Motor neuron (in vitro differentiated cells): ENCODE measurements at regions of chr5 and their contacts with region 1.

Region 1: DNA sequence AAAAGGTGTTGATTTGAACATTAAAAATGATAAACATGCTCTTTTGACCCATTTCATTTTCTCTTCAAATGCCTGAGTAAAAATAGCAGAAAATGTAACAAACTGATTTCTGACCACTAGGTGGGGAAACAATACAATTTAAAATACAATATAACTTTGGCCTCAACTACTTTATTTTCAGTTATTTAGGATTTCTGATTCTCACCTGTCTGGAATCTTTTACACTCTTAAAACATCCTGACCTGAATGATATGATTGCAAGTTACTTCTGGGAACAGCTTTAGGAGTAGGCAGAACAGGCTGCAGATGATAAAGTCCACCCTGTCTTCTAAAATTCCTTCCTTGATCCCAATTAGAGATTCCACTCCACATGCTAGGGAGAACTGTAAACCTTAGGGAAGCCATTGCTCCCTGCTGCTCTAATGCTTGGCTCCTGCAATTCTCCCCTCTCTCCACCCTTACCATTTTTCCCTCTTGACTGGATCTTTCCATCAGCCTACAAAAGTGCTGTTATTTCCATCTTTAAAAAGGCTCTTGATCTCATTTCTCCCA is 70.3 kb downstream of the FYB1 start:
- ATAC-seq: peak in 3 of 8 experiments; percentile 26 to 30 (median 28)
- H3K4me3 ChIP-seq: no peak overlapping the region
- H3K27ac ChIP-seq: no peak overlapping the region
- H3K4me1 ChIP-seq: no peaks in the 10 kb centered on the region

Region 2: DNA sequence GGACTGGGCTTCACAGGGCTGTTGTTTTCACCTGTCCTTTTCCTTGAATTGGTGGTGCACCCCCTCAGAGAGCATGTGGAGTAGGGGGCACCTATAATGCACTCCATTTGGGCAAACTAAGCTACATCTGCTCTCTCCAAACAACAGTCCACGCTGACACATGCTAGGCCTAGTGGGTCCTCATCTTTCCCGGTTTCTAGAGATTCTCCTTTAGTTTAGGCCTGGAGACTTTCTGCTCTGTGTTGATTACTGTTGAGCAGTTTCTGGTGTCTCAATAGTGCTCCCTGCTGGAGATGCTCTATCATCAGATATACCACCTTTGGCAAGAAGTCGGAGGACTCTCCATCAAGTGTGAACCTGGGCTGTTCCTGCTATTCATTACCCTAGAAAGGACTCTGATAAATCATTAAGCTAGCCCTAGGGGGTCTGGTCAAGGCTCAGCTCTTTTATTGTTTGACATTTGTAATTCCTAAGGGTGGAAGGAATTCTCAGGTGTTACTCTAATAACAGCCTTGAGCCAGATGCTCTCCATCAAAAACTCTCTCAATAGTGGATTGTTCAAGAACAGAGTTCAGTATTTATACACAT is 134.3 kb after region 1 on chr5:
- in situ Hi-C with region 1: loop called in 2 of 9 experiments (anchors 25 kb)
- ATAC-seq: peak in 3 of 8 experiments; percentile 95 to 98 (median 98)
- H3K4me3 ChIP-seq: no peak overlapping the region
- H3K27ac ChIP-seq: no peak overlapping the region
- H3K4me1 ChIP-seq: no peaks in the 10 kb centered on the region

Region 3: DNA sequence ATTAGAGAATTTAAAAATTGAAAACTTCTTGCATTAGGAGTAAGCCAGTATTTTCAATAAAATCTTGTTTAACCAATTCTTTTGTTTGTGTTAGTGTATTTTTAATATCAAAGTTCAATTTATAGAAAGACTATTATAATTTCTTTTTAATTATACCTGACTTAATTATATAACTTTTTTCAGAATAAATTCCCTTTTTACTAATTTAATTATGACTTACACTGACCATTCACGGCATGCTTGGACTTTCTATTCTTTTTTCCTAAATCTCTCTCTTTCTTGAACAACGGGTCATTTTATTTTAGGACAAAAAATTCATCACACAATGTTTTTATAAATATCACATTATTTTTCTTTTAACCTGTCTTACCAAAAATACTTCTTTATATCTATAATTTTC is 975.3 kb after region 1 on chr5:
- in situ Hi-C with region 1: no loop called
- ATAC-seq: no peak
- H3K4me3 ChIP-seq: no peak overlapping the region
- H3K27ac ChIP-seq: no peak overlapping the region
- H3K4me1 ChIP-seq: no peaks in the 10 kb centered on the region